Caco-2 (cell line): ENCODE measurements at regions of chr6 and their contacts with region 1.

Region 1: GRCh38 chr6:31739639-31740396 is at the start of gene MSH5:
- DNase-seq: peak; percentile 99
- H3K4me3 ChIP-seq: peak within 1 kb of the TSS; percentile 69
- H3K4me3 Mint-ChIP-seq: peak within 1 kb of the TSS; percentile 95
- H3K27ac Mint-ChIP-seq: peak within 1 kb of the TSS; percentile 98
- H3K4me1 ChIP-seq: peaks cover 23% of the 10 kb centered on the region
- H3K4me1 Mint-ChIP-seq: peaks cover 22% of the 10 kb centered on the region
- H3K27me3 ChIP-seq: no peaks in the 10 kb centered on the region
- H3K27me3 Mint-ChIP-seq: no peaks in the 10 kb centered on the region
- CTCF ChIP-seq: no peak
- total RNA-seq, gene MSH5: 49.6 and 51.0 TPM in 2 replicates

Region 2: DNA sequence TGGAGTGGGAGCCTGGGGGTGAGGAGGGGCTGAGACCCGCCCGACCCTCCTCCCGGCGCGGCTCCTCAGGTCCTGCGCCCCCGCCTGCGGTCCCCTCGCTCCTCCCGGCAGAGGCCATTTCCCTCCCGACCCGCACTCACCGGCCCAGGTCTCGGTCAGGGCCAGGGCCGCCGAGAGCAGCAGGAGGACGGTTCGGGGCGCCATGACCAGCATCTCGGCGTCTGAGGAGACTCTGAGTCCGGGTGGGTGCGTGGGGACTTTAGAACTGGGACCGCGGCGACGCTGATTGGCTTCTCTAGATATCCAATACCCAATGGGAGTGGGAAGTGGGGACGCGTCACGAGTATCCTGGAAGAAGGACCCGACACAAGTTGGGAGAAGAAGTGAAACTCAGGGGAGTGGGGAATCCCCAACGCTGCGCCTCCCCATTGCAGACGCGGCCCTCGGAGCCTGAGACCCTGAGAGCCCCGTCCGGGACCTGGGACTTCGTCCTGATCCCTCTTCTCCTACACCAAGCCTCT is 382.8 kb before region 1 on chr6 and contains the start of gene HLA-B:
- CTCF ChIA-PET with region 1: no interaction called
- POLR2A ChIA-PET with region 1: no interaction called
- intact Hi-C with region 1: no loop called
- DNase-seq: peak in 1 of 2 experiments; percentile 15
- H3K4me3 ChIP-seq: peak within 1 kb of the TSS; percentile 35
- H3K4me3 Mint-ChIP-seq: peak within 1 kb of the TSS; percentile 70
- H3K27ac Mint-ChIP-seq: no peak within 1 kb of the TSS
- H3K4me1 ChIP-seq: no peaks in the 10 kb centered on the region
- H3K4me1 Mint-ChIP-seq: no peaks in the 10 kb centered on the region
- H3K27me3 ChIP-seq: no peaks in the 10 kb centered on the region
- H3K27me3 Mint-ChIP-seq: peaks cover 35% of the 10 kb centered on the region
- CTCF ChIP-seq: no peak
- total RNA-seq, gene HLA-B: 40.9 and 41.9 TPM in 2 replicates

Region 3: GRCh38 chr6:31546962-31547726 is 192.7 kb before region 1 on chr6 and contains the start of gene NFKBIL1:
- CTCF ChIA-PET with region 1: no interaction called
- POLR2A ChIA-PET with region 1: interaction called, 3 read pairs
- intact Hi-C with region 1: loop called (anchors 5 kb)
- DNase-seq: peak; percentile 91 to 93
- H3K4me3 ChIP-seq: peak within 1 kb of the TSS; percentile 44
- H3K4me3 Mint-ChIP-seq: peak within 1 kb of the TSS; percentile 87
- H3K27ac Mint-ChIP-seq: peak within 1 kb of the TSS; percentile 64
- H3K4me1 ChIP-seq: peaks cover 6% of the 10 kb centered on the region
- H3K4me1 Mint-ChIP-seq: peaks cover 12% of the 10 kb centered on the region
- H3K27me3 ChIP-seq: no peaks in the 10 kb centered on the region
- H3K27me3 Mint-ChIP-seq: no peaks in the 10 kb centered on the region
- CTCF ChIP-seq: no peak
- total RNA-seq, gene NFKBIL1: 14.7 and 17.4 TPM in 2 replicates

Region 4: GRCh38 chr6:31702819-31703522 is 36.8 kb before region 1 on chr6 and contains the start of gene ABHD16A:
- CTCF ChIA-PET with region 1: interaction called, 3 read pairs
- POLR2A ChIA-PET with region 1: interaction called, 6 read pairs
- intact Hi-C with region 1: loop called (anchors 5 kb)
- DNase-seq: peak; percentile 97 to 98
- H3K4me3 ChIP-seq: peak within 1 kb of the TSS; percentile 50
- H3K4me3 Mint-ChIP-seq: peak within 1 kb of the TSS; percentile 91
- H3K27ac Mint-ChIP-seq: peak within 1 kb of the TSS; percentile 87
- H3K4me1 ChIP-seq: peaks cover 34% of the 10 kb centered on the region
- H3K4me1 Mint-ChIP-seq: peaks cover 11% of the 10 kb centered on the region
- H3K27me3 ChIP-seq: no peaks in the 10 kb centered on the region
- H3K27me3 Mint-ChIP-seq: no peaks in the 10 kb centered on the region
- CTCF ChIP-seq: no peak
- total RNA-seq, gene ABHD16A: 62.7 and 63.2 TPM in 2 replicates

Region 5: GRCh38 chr6:31758281-31758680 is 18.5 kb after region 1 on chr6:
- CTCF ChIA-PET with region 1: no interaction called
- POLR2A ChIA-PET with region 1: interaction called, 14 read pairs
- intact Hi-C with region 1: loop called (anchors 2 kb)
- DNase-seq: no peak
- H3K4me3 ChIP-seq: no peak overlapping the region
- H3K4me3 Mint-ChIP-seq: no peak overlapping the region
- H3K27ac Mint-ChIP-seq: peak overlapping the region; percentile 16
- H3K4me1 ChIP-seq: peaks cover 2% of the 10 kb centered on the region
- H3K4me1 Mint-ChIP-seq: peaks cover 3% of the 10 kb centered on the region
- H3K27me3 ChIP-seq: no peaks in the 10 kb centered on the region
- H3K27me3 Mint-ChIP-seq: no peaks in the 10 kb centered on the region
- CTCF ChIP-seq: no peak

Region 6: DNA sequence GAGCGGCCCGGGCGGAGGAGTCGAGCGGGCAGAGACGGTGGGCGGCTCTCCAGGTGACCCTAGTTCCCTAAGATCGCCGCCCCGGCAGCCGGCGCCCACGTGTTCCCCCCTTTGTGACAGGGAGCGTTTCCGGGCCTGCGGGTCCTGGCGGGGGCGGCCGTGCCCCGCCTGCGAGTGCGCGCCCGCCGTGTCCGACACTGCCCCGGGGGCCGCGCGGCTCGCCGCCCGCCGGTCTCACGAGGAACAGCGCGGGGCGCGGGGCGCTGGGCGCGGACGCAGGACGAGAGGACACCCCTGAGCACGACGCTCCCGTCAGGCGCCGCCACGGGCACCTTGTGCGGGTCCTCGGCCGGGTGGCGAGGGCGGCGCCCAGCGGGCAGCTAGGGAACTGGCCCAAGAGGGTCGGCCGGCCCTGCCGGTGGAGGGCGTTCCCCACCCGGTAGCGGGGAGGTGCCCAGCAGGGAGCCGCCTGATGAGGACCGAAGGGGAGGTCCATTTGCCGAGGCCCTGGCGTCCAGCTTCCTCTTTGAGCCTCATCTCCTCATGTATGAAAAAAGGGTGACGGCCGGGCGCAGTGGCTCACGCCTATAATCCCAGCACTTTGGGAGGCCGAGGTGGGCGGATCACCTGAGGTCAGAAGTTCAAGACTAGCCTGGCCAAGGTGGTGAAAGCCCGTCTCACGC is 55.9 kb after region 1 on chr6 and contains the start of gene VARS1:
- CTCF ChIA-PET with region 1: interaction called, 5 read pairs
- POLR2A ChIA-PET with region 1: interaction called, 14 read pairs
- intact Hi-C with region 1: no loop called
- DNase-seq: peak; percentile 92 to 95
- H3K4me3 ChIP-seq: peak within 1 kb of the TSS; percentile 80
- H3K4me3 Mint-ChIP-seq: peak within 1 kb of the TSS; percentile 98
- H3K27ac Mint-ChIP-seq: peak within 1 kb of the TSS; percentile 94
- H3K4me1 ChIP-seq: 0 out of 2 replicates have a peak, but pooled peaks cover 3% of the 10 kb centered on the region
- H3K4me1 Mint-ChIP-seq: peaks cover 15% of the 10 kb centered on the region
- H3K27me3 ChIP-seq: no peaks in the 10 kb centered on the region
- H3K27me3 Mint-ChIP-seq: no peaks in the 10 kb centered on the region
- CTCF ChIP-seq: peak; percentile 78 to 94
- total RNA-seq, gene VARS1: 132 and 135 TPM in 2 replicates

Region 7: DNA sequence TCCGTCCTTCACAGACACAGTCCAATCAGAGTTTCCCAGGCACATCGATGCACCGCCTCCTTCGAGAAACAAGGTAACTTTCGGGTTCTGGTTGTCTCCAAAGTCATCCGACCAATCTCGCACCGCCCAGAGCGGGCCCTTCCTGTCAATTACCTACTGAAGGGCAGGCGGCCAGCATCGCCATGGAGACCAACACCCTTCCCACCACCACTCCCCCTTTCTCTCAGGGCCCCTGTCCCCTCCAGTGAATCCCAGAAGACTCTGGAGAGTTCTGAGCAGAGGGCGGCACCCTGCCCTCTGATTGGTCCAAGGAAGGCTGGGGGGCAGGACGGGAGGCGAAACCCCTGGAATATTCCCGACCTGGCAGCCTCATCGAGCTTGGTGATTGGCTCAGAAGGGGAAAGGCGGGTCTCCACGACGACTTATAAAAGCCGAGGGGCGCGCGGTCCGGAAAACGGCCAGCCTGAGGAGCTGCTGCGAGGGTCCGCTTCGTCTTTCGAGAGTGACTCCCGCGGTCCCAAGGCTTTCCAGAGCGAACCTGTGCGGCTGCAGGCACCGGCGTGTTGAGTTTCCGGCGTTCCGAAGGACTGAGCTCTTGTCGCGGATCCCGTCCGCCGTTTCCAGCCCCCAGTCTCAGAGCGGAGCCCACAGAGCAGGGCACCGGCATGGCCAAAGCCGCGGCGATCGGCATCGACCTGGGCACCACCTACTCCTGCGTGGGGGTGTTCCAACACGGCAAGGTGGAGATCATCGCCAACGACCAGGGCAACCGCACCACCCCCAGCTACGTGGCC is 87.7 kb after region 1 on chr6 and contains the start of gene HSPA1B:
- CTCF ChIA-PET with region 1: interaction called, 5 read pairs
- POLR2A ChIA-PET with region 1: interaction called, 32 read pairs
- intact Hi-C with region 1: loop called (anchors 2 kb)
- DNase-seq: peak; percentile 98 to 100
- H3K4me3 ChIP-seq: peak within 1 kb of the TSS; percentile 71
- H3K4me3 Mint-ChIP-seq: peak within 1 kb of the TSS; percentile 96
- H3K27ac Mint-ChIP-seq: peak within 1 kb of the TSS; percentile 99
- H3K4me1 ChIP-seq: peaks cover 39% of the 10 kb centered on the region
- H3K4me1 Mint-ChIP-seq: peaks cover 10% of the 10 kb centered on the region
- H3K27me3 ChIP-seq: no peaks in the 10 kb centered on the region
- H3K27me3 Mint-ChIP-seq: no peaks in the 10 kb centered on the region
- CTCF ChIP-seq: no peak
- total RNA-seq, gene HSPA1B: 99.0 and 112 TPM in 2 replicates